ENCODE measurements at regions of chr12 and their contacts with region 1.

Region 1: GRCh38 chr12:546921-547845 is 87.4 kb downstream of the B4GALNT3 start:
- DNase-seq: peak in 1 of 2 donors; percentile 79
- H3K4me3 ChIP-seq: no peak overlapping the region
- H3K27ac ChIP-seq: no peak overlapping the region
- H3K4me1 ChIP-seq: peaks cover 0 to 16% of the 10 kb centered on the region in 2 donors
- H3K27me3 ChIP-seq: no peaks in the 10 kb centered on the region
- CTCF ChIP-seq: peak; percentile 99 to 100 (median 99)

Region 2: DNA sequence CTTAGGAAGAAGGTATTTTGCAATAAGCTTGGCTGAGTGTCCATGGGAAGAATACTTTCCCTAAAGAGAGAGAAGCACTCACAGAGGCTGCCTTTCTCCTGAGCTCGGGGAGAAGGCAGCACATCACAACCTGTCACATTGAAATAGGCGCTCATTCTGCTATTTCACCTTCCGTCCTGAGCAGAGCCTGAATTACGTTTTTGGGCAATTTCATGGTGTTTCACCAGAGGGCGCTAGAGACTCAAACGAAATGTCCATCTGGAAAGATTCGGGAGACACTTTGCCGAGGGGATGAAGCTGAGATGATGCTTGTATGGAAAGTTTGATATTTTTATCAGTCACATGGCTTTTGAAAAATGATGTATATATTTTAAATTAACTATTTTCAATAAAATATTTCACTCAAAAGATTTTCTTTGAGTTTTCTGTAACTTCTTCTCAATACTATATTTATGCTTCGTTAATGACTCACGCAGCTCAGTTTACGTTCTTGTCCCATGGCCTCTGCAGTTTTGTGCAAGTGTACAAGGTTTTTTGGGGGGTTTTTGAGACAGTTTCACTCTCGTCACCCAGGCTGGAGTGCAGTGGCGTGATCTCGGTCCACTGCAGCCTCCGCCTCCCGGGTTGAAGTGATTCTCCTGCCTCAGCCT is 104.8 kb before region 1 on chr12:
- intact Hi-C with region 1: loop called (anchors 2 kb)
- DNase-seq: no peak
- H3K4me3 ChIP-seq: no peak overlapping the region
- H3K27ac ChIP-seq: no peak overlapping the region
- H3K4me1 ChIP-seq: no peaks in the 10 kb centered on the region
- H3K27me3 ChIP-seq: no peaks in the 10 kb centered on the region
- CTCF ChIP-seq: peak; percentile 46 to 76 (median 75)

Region 3: DNA sequence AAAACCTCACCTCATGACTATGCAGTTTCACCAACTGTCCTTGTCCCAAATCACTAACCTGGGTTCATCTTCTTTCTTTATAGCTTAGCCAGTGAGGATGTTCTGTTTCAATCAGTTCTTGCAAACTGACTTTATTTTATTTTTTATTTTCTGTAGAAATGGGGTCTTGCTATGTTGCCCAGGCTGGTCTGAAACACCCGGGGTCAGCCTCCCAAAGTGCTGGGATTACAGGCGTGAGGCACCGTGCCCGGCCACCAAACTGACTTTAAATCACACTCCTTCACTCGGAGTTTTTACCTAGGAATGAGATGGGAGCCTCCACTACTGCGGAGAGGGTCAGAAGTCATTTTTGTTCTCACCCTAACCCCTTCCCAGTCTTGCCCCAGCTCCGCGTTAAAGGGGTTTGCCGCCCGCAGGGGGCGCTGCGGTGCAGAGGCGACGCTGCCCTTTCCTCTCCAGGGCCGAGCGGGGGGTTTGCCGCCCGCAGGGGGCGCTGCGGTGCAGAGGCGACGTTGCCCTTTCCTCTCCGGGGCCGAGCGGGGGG is 94.4 kb before region 1 on chr12:
- intact Hi-C with region 1: loop called (anchors 1 kb)
- DNase-seq: no peak
- H3K4me3 ChIP-seq: no peak overlapping the region
- H3K27ac ChIP-seq: no peak overlapping the region
- H3K4me1 ChIP-seq: no peaks in the 10 kb centered on the region
- H3K27me3 ChIP-seq: no peaks in the 10 kb centered on the region
- CTCF ChIP-seq: peak in 1 of 3 experiments; percentile 47

Region 4: DNA sequence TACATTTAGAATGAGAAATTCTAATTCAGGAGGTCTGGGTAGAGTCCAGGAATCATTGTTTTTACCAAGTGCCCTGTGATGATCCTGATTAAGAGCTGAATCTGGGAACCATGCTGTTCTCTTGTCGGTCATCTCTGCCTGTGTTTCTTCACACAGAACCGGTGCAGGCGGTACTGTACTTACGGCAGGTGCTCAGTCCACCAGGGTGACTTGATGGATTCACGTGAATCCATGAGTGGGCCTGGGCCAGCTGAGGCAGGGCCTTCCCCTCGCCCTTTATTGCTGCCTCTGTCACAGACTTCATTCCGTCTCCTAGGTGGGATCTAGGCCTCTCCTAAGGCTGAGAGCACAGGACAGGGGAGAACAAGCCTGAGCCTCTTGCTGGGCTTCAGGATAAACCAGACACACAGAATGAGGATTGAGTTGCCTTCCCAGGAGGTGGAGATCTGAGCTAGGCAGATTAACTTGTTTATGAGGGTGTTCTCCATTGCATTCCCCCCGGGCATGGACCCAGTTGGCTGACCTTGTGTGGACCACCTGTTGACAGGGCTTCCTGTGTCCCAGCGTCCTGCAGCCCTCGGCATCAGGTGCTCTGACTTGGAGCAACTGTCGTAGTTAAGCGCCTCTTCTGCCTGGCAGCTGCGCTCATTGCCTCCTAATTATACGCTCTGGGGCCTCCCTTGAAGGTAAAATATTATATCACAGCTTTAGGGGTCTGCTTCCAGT is 45.3 kb before region 1 on chr12:
- intact Hi-C with region 1: loop called (anchors 2 kb)
- DNase-seq: no peak
- H3K4me3 ChIP-seq: no peak overlapping the region
- H3K27ac ChIP-seq: no peak overlapping the region
- H3K4me1 ChIP-seq: peaks cover 0 to 13% of the 10 kb centered on the region in 2 donors
- H3K27me3 ChIP-seq: no peaks in the 10 kb centered on the region
- CTCF ChIP-seq: no peak

Region 5: DNA sequence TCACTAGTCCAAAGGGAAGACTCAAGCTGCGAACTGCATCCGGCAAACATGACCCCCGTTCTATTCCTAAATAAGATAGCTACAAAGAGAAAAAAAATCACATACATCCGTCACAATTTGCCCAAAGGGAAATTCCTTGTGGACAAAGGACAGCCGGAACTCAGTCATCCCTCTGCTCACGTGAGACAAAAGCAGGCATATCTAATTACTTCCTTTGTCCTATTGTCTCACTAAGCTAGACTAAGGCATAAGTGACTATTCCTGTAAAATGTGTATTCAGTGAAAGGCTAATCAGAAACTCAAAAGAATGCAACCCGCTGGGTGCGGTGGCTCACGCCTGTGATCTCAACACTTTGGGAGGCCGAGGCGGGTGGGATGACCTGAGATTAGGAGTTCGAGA is 143.3 kb after region 1 on chr12:
- intact Hi-C with region 1: no loop called
- DNase-seq: no peak
- H3K4me3 ChIP-seq: no peak overlapping the region
- H3K27ac ChIP-seq: no peak overlapping the region
- H3K4me1 ChIP-seq: no peaks in the 10 kb centered on the region
- H3K27me3 ChIP-seq: no peaks in the 10 kb centered on the region
- CTCF ChIP-seq: no peak